Heart right ventricle (tissue), 16 donors: ENCODE measurements at regions of chr1 and their contacts with region 1.

Region 1: DNA sequence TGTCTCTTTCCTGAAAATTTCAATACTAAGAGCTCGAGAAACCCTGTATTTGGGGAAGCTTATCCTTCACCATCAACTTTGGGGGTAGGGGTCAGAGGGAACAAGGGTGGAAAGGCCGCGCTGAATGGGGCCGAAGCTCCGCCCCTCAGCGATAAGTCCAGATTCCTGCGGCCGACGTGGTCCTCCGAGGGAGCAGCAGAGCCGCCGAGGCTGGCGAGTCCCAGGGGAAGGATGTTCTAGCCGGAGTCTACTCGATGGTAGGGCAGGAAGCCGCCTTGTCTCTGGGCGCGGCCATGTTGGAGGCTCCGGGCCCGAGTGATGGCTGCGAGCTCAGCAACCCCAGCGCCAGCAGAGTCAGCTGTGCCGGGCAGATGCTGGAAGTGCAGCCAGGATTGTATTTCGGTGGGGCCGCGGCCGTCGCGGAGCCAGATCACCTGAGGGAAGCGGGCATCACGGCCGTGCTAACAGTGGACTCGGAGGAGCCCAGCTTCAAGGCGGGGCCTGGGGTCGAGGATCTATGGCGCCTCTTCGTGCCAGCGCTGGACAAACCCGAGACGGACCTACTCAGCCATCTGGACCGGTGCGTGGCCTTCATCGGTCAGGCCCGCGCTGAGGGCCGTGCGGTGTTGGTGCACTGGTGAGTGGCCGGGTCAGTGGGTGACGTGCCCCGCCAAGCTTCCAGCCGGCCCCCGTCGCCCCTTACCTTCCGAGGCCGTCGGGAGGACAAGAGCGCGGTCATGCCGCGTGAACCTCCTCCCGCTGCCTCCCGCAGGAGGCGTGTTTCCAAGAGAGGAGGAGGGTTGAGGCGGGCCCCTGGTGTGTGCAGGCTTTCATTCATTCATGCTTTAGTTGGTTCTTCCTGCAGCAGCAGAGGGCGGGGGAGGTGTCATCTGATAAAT is at the start of gene DUSP12:
- DNase-seq: peak; percentile 92 to 96
- ATAC-seq: peak; percentile 99 to 100 (median 100)
- H3K4me3 ChIP-seq: peak within 1 kb of the TSS; percentile 60 to 98 (median 88)
- H3K27ac ChIP-seq: peak within 1 kb of the TSS; percentile 70 to 95 (median 89)
- H3K4me1 ChIP-seq: peaks cover 4 to 27% (median 14%) of the 10 kb centered on the region in 9 donors
- H3K27me3 ChIP-seq: peaks cover 0 to 13% (median 0%) of the 10 kb centered on the region in 7 donors
- CTCF ChIP-seq: peak in 4 of 9 donors; percentile 27 to 48 (median 40)
- total RNA-seq, gene DUSP12: 3.5 to 10.2 (median 6.6) TPM

Region 2: GRCh38 chr1:161399257-161399998 is 350.3 kb before region 1 on chr1:
- intact Hi-C with region 1: loop called in 2 of 10 experiments (anchors 10 kb)
- DNase-seq: peak; percentile 89 to 90
- ATAC-seq: peak; percentile 87 to 93 (median 90)
- H3K4me3 ChIP-seq: peak overlapping the region; percentile 57 to 88 (median 71)
- H3K27ac ChIP-seq: peak overlapping the region; percentile 96 to 100 (median 100)
- H3K4me1 ChIP-seq: peaks cover 0 to 26% (median 12%) of the 10 kb centered on the region in 9 donors
- H3K27me3 ChIP-seq: peaks cover 0 to 4% (median 0%) of the 10 kb centered on the region in 7 donors
- CTCF ChIP-seq: peak; percentile 22 to 62 (median 43)

Region 3: GRCh38 chr1:161486806-161487741 is 262.7 kb before region 1 on chr1:
- intact Hi-C with region 1: loop called in 9 of 10 experiments (anchors 10 kb)
- DNase-seq: peak; percentile 35 to 45
- ATAC-seq: peak in 7 of 8 donors; percentile 67 to 87 (median 78)
- H3K4me3 ChIP-seq: peak overlapping the region in 4 of 10 donors; percentile 12 to 35 (median 20)
- H3K27ac ChIP-seq: no peak overlapping the region
- H3K4me1 ChIP-seq: peaks cover 0 to 24% (median 0%) of the 10 kb centered on the region in 9 donors
- H3K27me3 ChIP-seq: peaks cover 0 to 69% (median 44%) of the 10 kb centered on the region in 7 donors
- CTCF ChIP-seq: peak; percentile 46 to 79 (median 73)

Region 4: DNA sequence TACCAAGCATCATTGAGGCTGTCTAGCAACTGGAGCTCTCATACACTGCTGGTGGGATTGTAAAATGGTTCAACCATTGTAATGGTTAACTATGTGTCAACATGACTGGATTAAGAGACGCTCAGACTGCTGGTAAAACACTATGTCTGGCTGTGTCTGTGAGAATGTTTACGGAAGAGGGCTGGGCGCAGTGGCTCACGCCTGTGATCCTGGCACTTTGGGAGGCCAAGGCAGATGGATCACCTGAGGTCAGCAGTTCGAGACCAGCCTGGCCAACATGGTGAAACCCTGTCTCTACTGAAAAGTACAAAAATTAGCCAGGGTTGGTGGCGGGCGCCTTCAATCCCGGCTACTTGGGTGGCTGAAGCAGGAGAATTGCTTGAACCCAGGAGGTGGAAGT is 47.5 kb before region 1 on chr1:
- intact Hi-C with region 1: no loop called
- DNase-seq: no peak
- ATAC-seq: no peak
- H3K4me3 ChIP-seq: no peak overlapping the region
- H3K27ac ChIP-seq: no peak overlapping the region
- H3K4me1 ChIP-seq: peaks cover 0 to 13% (median 3%) of the 10 kb centered on the region in 9 donors
- H3K27me3 ChIP-seq: peaks cover 0 to 19% (median 0%) of the 10 kb centered on the region in 7 donors
- CTCF ChIP-seq: no peak